CD14-positive monocyte (primary cell): ENCODE measurements at regions of chr3 and their contacts with region 1.

Region 1: GRCh38 chr3:193157051-193157450 is 84.0 kb upstream of the PLAAT1 start:
- DNase-seq: no peak
- H3K4me3 ChIP-seq: no peak overlapping the region
- H3K4me3 Mint-ChIP-seq: no peak overlapping the region
- H3K27ac ChIP-seq: no peak overlapping the region
- H3K27ac Mint-ChIP-seq: no peak overlapping the region
- H3K4me1 ChIP-seq: no peaks in the 10 kb centered on the region
- H3K4me1 Mint-ChIP-seq: no peaks in the 10 kb centered on the region
- H3K27me3 ChIP-seq: no peaks in the 10 kb centered on the region
- H3K27me3 Mint-ChIP-seq: peaks cover 0 to 2% (median 0%) of the 10 kb centered on the region in 3 donors
- CTCF ChIP-seq: no peak

Region 2: DNA sequence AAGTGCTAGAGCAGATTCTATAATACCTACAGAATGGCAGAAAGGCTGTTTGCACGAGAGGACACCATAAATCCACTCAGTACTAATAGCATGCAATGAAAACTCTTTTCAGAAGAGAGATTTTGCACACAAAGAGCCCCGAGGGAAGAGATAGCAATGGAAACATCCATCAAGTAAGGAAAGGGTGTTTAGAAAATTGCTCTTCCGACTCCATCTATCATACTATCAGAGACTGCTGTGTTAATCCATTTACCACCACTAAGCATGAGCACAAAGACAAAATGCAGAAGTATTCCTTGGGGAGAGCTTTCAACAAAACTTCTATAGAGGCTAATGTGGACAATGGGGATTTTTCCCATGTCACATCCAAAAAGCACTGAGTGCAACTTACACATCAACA is 11.9 kb after region 1 on chr3:
- intact Hi-C with region 1: loop called in 1 of 2 experiments (anchors 1 kb)
- DNase-seq: no peak
- H3K4me3 ChIP-seq: no peak overlapping the region
- H3K4me3 Mint-ChIP-seq: no peak overlapping the region
- H3K27ac ChIP-seq: no peak overlapping the region
- H3K27ac Mint-ChIP-seq: no peak overlapping the region
- H3K4me1 ChIP-seq: no peaks in the 10 kb centered on the region
- H3K4me1 Mint-ChIP-seq: no peaks in the 10 kb centered on the region
- H3K27me3 ChIP-seq: no peaks in the 10 kb centered on the region
- H3K27me3 Mint-ChIP-seq: no peaks in the 10 kb centered on the region
- CTCF ChIP-seq: no peak